AG04450 (cell line): ENCODE measurements at regions of chr11 and their contacts with region 1.

Region 1: GRCh38 chr11:128630367-128631230 is 43.2 kb upstream of the ETS1 start:
- DNase-seq: peak; percentile 76
- H3K4me3 ChIP-seq: no peak overlapping the region
- H3K27ac ChIP-seq: no peak overlapping the region
- H3K27me3 ChIP-seq: peaks cover under 1% of the 10 kb centered on the region
- CTCF ChIP-seq: peak; percentile 94

Region 2: DNA sequence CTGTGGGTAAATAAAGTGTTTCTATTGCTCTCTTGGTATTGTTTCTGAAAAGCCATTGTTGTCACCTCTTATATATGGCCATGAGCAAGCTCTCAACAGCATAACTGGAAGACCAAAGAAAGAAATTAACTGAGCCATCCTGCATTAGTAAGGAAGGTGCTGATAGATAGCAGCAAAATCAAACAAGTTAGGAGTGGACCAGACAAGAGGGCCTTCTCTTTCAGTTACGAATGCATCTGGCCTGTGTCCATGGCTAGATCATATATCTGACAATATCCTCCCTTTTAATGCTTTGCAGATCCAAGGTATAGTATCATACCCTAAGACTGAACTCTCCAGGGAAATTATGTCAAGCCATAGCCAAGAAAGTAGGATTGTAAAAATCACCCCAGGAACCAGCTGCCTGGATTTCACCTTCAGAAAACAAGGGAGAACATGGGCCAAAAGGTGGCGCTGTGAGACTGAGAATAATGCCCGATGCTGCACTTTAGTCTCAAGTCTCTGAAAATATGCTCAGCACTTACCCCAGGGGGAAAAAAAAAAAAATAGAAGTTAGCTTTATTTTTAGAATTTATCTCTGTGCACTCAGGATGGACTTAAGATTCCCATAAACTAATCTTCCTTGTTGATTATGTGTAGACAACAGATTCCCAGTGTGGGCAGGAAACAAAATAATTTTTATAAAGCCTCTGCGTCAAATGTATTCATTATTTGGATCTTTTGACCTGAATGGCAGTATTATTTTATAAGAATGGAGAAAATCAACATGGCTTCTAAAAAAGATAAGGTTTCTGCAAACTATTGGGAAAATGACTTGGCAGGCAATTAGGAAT is 458.3 kb before region 1 on chr11:
- CTCF ChIA-PET with region 1: interaction called, 295 read pairs
- POLR2A ChIA-PET with region 1: no interaction called
- DNase-seq: peak; percentile 72
- H3K4me3 ChIP-seq: no peak overlapping the region
- H3K27ac ChIP-seq: no peak overlapping the region
- H3K27me3 ChIP-seq: no peaks in the 10 kb centered on the region
- CTCF ChIP-seq: peak; percentile 83

Region 3: DNA sequence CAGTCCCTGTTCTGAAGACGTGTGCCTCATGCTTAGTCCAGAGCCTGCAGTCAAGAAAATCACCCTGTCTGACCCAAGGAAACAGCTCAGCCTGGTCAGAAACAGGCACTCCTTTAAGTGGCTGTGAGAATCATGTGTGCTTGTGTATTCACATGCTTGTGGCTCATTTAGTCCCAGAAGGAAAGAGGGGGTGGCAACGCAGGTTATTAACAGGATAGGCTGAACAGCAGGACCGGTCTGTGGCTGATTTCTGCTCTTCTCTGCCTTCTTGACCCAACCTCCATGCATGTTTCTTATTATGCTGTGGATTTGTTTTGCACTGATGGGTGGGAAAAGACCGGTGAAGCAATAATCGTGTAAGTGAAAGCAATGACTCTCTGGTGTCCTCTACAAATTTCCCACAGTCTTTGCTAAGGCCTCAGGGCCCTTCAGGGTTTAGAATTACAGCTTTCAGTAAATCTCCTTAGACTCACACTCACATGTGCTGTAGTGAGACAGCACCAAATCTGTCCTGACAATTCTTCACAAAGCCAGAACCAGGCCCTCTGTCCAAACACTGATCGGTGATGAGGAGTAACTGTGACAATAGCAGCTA is 331.4 kb before region 1 on chr11:
- CTCF ChIA-PET with region 1: interaction called, 17 read pairs
- POLR2A ChIA-PET with region 1: no interaction called
- DNase-seq: no peak
- H3K4me3 ChIP-seq: no peak overlapping the region
- H3K27ac ChIP-seq: no peak overlapping the region
- H3K27me3 ChIP-seq: no peaks in the 10 kb centered on the region
- CTCF ChIP-seq: no peak

Region 4: DNA sequence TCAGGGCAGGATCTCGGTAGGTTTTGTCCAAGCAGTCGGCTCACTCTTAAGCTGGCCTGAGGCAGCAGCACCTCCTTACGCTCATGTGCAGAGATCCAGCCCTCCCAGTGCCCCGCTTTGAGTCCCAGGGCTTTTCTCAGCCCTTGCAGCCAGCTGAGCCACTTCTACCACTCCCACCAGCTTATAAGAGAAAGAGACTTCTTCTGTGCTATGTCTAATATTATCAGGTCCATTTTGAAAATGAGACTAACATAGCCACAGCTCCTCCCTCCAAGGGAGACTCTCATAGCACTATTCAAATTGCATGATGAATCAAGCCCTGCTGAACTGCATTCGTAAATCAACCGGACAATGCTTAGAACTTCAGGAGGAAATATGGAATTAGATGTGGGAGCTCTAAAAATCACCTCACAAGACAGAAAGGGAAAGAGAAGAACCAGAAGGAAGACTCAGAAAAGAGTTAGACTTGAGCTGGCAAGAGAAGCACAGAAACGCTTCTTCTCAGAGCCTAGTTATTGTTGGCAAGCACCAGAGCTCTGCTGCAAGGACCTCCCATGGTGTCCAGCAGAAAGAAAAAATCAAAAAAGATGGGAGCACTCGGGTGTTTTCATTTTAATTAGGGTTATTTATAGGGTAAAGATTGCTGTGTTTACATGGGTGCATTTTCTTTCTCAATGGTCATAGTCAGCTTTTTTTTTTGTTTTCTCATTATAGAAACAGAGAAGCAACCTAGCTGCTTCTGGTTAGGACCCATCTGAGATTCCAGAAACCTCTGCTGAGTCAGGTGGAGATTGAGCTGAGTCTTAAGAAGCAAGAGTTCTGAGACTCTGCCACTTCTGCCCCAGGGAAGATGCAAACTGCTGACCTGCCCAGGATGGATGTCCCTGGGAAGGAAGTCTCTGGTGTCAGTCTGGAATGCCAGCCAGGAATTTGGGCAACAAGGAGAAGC is 224.6 kb before region 1 on chr11:
- CTCF ChIA-PET with region 1: interaction called, 21 read pairs
- POLR2A ChIA-PET with region 1: no interaction called
- DNase-seq: no peak
- H3K4me3 ChIP-seq: no peak overlapping the region
- H3K27ac ChIP-seq: no peak overlapping the region
- H3K27me3 ChIP-seq: no peaks in the 10 kb centered on the region
- CTCF ChIP-seq: no peak

Region 5: DNA sequence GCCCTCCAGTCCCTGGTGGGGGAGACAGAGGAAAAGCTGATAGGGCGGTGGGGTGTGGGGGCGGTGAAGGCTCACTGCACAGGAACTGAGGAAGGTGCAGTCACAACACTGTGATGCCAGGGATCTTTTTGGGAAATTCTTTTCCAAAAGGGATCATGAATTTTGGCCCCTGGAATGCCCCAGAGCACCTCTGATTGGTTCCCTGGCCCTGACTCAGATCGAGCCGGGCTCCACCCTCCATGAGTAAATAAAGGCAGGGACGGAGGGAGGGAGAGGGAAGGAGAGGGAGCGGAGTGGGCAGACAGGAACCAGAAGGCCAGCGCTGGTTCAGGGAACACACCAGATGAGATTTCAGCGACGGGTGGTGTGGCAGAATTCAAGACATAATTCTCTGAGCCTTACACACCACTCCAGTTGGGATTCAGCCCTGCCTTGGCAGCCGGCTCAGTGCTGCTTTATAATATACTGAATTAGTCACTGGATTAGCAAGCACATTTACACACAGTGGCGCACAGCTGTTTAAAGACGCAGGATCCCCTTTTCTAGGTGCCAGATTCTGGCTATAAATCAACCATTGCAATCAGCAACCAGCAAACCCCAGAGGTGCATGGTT is 123.5 kb before region 1 on chr11:
- CTCF ChIA-PET with region 1: interaction called, 16 read pairs
- POLR2A ChIA-PET with region 1: no interaction called
- DNase-seq: peak; percentile 92
- H3K4me3 ChIP-seq: peak overlapping the region; percentile 34
- H3K27ac ChIP-seq: peak overlapping the region; percentile 92
- H3K27me3 ChIP-seq: no peaks in the 10 kb centered on the region
- CTCF ChIP-seq: no peak

Region 6: DNA sequence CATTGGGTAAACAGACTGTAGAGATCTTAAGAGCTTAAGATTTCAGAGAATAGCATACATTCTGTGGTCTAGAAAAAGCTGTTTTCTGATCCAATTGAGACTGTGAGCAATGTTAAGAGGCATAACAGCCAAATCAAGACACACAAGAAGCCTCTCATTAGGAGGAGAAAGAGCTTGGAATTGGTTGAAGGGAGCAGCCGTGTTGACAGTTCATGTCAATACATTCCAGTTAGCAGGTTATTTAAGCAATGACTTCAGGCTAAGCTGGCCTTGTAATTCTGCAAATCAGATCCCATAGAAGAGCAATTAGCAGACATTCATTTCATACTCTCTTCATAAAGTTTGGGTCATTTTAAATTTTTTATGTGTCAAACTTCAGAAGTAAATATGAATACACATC is 94.1 kb before region 1 on chr11:
- CTCF ChIA-PET with region 1: no interaction called
- POLR2A ChIA-PET with region 1: no interaction called
- DNase-seq: no peak
- H3K4me3 ChIP-seq: no peak overlapping the region
- H3K27ac ChIP-seq: no peak overlapping the region
- H3K27me3 ChIP-seq: no peaks in the 10 kb centered on the region
- CTCF ChIP-seq: no peak

Region 7: GRCh38 chr11:128552783-128553661 is 77.6 kb before region 1 on chr11:
- CTCF ChIA-PET with region 1: interaction called, 45 read pairs
- POLR2A ChIA-PET with region 1: no interaction called
- DNase-seq: no peak
- H3K4me3 ChIP-seq: no peak overlapping the region
- H3K27ac ChIP-seq: no peak overlapping the region
- H3K27me3 ChIP-seq: no peaks in the 10 kb centered on the region
- CTCF ChIP-seq: no peak

Region 8: DNA sequence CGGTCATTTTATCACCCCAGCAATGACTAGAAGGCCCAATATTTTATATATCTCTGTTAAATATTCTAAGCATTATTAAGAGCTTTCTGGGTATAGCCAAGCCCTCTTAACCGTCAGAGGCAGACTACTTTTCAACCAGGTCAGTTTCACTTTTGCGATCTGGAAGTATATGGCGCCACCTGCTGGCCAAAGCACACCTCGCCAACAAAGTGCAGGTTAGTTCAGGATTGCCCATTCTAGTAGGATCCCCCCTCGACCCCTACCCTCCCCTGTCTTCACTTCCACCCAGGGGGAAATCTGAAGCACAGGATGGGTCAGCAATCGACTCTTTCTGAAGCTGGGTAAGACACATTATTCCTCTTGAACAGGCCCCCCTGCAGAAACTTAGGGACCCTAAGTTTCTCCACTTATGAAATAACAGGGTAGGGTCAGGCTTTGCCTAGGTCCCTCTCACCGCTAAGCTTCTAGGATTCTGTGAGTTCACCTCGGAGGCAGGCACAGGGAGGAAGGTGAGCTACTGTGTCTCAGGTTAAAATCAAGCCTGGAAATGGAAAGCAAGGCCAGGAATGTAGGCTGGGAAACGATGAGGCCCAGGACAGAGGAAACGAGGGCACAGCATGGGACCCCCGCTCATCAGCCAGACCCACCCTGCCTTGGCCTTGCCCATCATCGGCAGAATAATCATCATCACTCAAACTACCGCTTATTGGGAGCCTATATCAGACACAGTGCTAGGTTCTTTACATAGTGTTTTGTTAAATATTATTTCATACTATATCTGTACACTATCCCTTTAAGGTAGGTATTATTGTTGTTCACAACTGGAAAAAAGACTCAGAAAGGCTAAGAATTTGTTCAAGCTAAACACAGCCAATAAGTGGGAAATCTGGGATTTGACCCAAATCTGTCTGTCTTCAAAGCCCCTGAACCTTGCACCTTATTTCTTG is 200.8 kb after region 1 on chr11:
- CTCF ChIA-PET with region 1: interaction called, 116 read pairs
- POLR2A ChIA-PET with region 1: no interaction called
- DNase-seq: peak; percentile 76
- H3K4me3 ChIP-seq: no peak overlapping the region
- H3K27ac ChIP-seq: no peak overlapping the region
- H3K27me3 ChIP-seq: peaks cover 7% of the 10 kb centered on the region
- CTCF ChIP-seq: peak; percentile 84